ENCODE measurements at regions of chr1 and their contacts with region 1.

Region 1: DNA sequence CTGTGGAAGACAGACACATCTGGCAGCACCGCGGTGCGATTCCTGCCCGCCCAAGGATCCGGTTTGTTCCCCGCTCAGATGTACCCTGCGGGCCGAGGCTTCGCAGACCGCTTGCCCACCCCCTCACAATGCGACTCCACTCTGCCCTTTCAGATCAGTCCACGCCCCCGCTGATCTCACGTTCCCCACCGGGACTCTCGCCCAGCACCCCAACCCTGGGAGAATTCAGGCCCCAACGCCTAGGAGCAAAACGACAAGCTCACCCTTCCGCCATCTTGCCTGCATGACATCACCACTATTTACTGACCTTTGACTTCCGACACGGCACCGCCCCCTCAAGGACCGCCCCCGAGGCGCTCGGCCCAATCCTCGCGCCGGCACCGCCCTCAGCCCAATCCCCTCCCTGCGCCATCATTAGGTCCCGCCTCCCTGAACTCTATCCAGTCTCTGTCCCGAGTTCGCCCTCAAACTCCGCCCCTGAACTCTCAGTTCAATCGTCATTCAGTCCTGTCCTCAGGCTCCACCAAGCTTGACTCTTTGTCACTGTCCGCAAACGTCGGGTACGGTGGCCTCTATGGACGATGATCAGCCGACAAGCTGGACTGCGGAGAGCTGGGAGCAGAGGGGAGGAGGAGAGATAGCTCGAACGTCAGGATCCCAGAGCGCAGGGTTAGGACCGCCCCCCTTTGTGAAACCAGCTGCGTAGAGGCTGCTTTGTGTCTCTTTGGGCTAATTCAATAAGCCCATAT is at the start of gene BSDC1:
- DNase-seq: peak; percentile 99
- H3K4me3 Mint-ChIP-seq: peak within 1 kb of the TSS; percentile 100
- H3K27ac Mint-ChIP-seq: peak within 1 kb of the TSS; percentile 98
- H3K4me1 Mint-ChIP-seq: peaks cover 30% of the 10 kb centered on the region
- H3K27me3 Mint-ChIP-seq: peaks cover 13% of the 10 kb centered on the region
- total RNA-seq, gene BSDC1: 52.5 to 52.6 TPM

Region 2: GRCh38 chr1:32200226-32201010 is 193.9 kb before region 1 on chr1 and contains the start of gene CCDC28B:
- CTCF ChIA-PET with region 1: no interaction called
- POLR2A ChIA-PET with region 1: interaction called, 11 read pairs
- DNase-seq: peak; percentile 54
- H3K4me3 Mint-ChIP-seq: peak within 1 kb of the TSS; percentile 72
- H3K27ac Mint-ChIP-seq: peak within 1 kb of the TSS; percentile 79
- H3K4me1 Mint-ChIP-seq: peaks cover 72% of the 10 kb centered on the region
- H3K27me3 Mint-ChIP-seq: no peaks in the 10 kb centered on the region
- total RNA-seq, gene CCDC28B: 20.2 to 23.5 TPM

Region 3: DNA sequence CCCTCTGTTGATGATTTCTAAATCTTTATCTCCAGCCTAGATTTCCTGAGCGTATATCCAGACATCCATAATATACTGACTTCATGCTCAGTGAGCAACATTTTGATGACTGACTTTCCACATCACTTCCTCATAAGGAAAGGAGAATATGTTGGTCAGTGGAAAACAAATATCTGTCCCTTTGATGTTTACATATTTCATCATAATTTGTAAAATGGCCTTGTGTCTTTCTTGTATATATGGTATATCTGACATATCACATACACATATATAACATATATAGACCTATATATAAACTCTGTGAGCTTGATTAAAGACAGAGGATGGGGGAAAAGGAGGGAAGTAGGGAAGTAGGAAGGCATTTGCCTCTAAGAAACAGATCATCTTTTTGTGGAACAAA is 163.5 kb after region 1 on chr1:
- CTCF ChIA-PET with region 1: no interaction called
- POLR2A ChIA-PET with region 1: no interaction called
- DNase-seq: no peak
- H3K4me3 Mint-ChIP-seq: no peak overlapping the region
- H3K27ac Mint-ChIP-seq: no peak overlapping the region
- H3K4me1 Mint-ChIP-seq: no peaks in the 10 kb centered on the region
- H3K27me3 Mint-ChIP-seq: peaks cover 4% of the 10 kb centered on the region

Measured in activated CD4-positive, alpha-beta memory T cell treated with anti-CD3 and anti-CD28 coated beads, Interleukin-2, amount 10 ng/mL, durations not matched to agents 7 days and 5 days (primary cell).